ENCODE measurements at regions of chr3 and their contacts with region 1.

Region 1: GRCh38 chr3:10322352-10322710 is 1.4 kb upstream of the SEC13 start:
- DNase-seq: peak in 3 of 9 donors; percentile 12 to 32 (median 17)
- ATAC-seq: no peak
- H3K4me3 ChIP-seq: no peak overlapping the region
- H3K4me3 Mint-ChIP-seq: peak overlapping the region in 5 of 10 donors; percentile 5 to 85 (median 32)
- H3K27ac ChIP-seq: no peak overlapping the region
- H3K27ac Mint-ChIP-seq: peak overlapping the region in 8 of 9 donors; percentile 0 to 97 (median 86)
- H3K4me1 ChIP-seq: peaks cover 12 to 22% of the 10 kb centered on the region in 2 donors
- H3K4me1 Mint-ChIP-seq: peaks cover 5 to 40% (median 30%) of the 10 kb centered on the region in 7 donors
- H3K27me3 ChIP-seq: no peaks in the 10 kb centered on the region
- H3K27me3 Mint-ChIP-seq: peaks cover 0 to 27% (median 9%) of the 10 kb centered on the region in 5 donors

Region 2: GRCh38 chr3:8963137-8963869 is 1359.0 kb before region 1 on chr3 and contains the start of gene RAD18:
- CTCF ChIA-PET with region 1: no interaction called
- POLR2A ChIA-PET with region 1: no interaction called
- intact Hi-C with region 1: loop called in 1 of 2 experiments (anchors 1 kb)
- DNase-seq: peak; percentile 87 to 95 (median 92)
- ATAC-seq: peak; percentile 97
- H3K4me3 ChIP-seq: peak within 1 kb of the TSS; percentile 80
- H3K4me3 Mint-ChIP-seq: peak within 1 kb of the TSS; percentile 85 to 99 (median 96)
- H3K27ac ChIP-seq: peak within 1 kb of the TSS; percentile 94
- H3K27ac Mint-ChIP-seq: peak within 1 kb of the TSS; percentile 94 to 99 (median 97)
- H3K4me1 ChIP-seq: peaks cover 6 to 10% of the 10 kb centered on the region in 2 donors
- H3K4me1 Mint-ChIP-seq: peaks cover 7 to 45% (median 38%) of the 10 kb centered on the region in 7 donors
- H3K27me3 ChIP-seq: no peaks in the 10 kb centered on the region
- H3K27me3 Mint-ChIP-seq: peaks cover 0 to 8% (median 4%) of the 10 kb centered on the region in 5 donors
- total RNA-seq, gene RAD18: 9.3 to 36.4 (median 18.2) TPM

Region 3: GRCh38 chr3:9649791-9650521 is 672.4 kb before region 1 on chr3:
- CTCF ChIA-PET with region 1: no interaction called
- POLR2A ChIA-PET with region 1: no interaction called
- intact Hi-C with region 1: loop called (anchors 1 kb)
- DNase-seq: peak in 2 of 9 donors; percentile 4 to 5
- ATAC-seq: peak; percentile 15
- H3K4me3 ChIP-seq: peak overlapping the region; percentile 97
- H3K4me3 Mint-ChIP-seq: peak overlapping the region; percentile 86 to 98 (median 95)
- H3K27ac ChIP-seq: peak overlapping the region; percentile 85
- H3K27ac Mint-ChIP-seq: peak overlapping the region; percentile 91 to 98 (median 97)
- H3K4me1 ChIP-seq: peaks cover 15 to 19% of the 10 kb centered on the region in 2 donors
- H3K4me1 Mint-ChIP-seq: peaks cover 19 to 51% (median 37%) of the 10 kb centered on the region in 7 donors
- H3K27me3 ChIP-seq: no peaks in the 10 kb centered on the region
- H3K27me3 Mint-ChIP-seq: peaks cover 0 to 3% (median 0%) of the 10 kb centered on the region in 5 donors

Region 4: GRCh38 chr3:9843715-9844438 is 478.5 kb before region 1 on chr3 and contains the start of gene RPUSD3:
- CTCF ChIA-PET with region 1: no interaction called
- POLR2A ChIA-PET with region 1: no interaction called
- intact Hi-C with region 1: loop called (anchors 1 to 2 kb)
- DNase-seq: peak; percentile 90 to 99 (median 94)
- ATAC-seq: peak; percentile 100
- H3K4me3 ChIP-seq: peak within 1 kb of the TSS; percentile 83
- H3K4me3 Mint-ChIP-seq: peak within 1 kb of the TSS; percentile 93 to 100 (median 97)
- H3K27ac ChIP-seq: peak within 1 kb of the TSS; percentile 82
- H3K27ac Mint-ChIP-seq: peak within 1 kb of the TSS; percentile 68 to 94 (median 91)
- H3K4me1 ChIP-seq: peaks cover 4 to 5% of the 10 kb centered on the region in 2 donors
- H3K4me1 Mint-ChIP-seq: peaks cover 12 to 40% (median 23%) of the 10 kb centered on the region in 7 donors
- H3K27me3 ChIP-seq: no peaks in the 10 kb centered on the region
- H3K27me3 Mint-ChIP-seq: no peaks in the 10 kb centered on the region
- total RNA-seq, gene RPUSD3: 17.7 to 61.2 (median 58.0) TPM

Region 5: GRCh38 chr3:10026084-10026890 is 296.0 kb before region 1 on chr3 and contains the start of gene FANCD2:
- CTCF ChIA-PET with region 1: no interaction called
- POLR2A ChIA-PET with region 1: no interaction called
- intact Hi-C with region 1: loop called (anchors 1 kb)
- DNase-seq: peak; percentile 88 to 99 (median 94)
- ATAC-seq: peak; percentile 95
- H3K4me3 ChIP-seq: peak within 1 kb of the TSS; percentile 96
- H3K4me3 Mint-ChIP-seq: peak within 1 kb of the TSS; percentile 93 to 99 (median 96)
- H3K27ac ChIP-seq: peak within 1 kb of the TSS; percentile 89
- H3K27ac Mint-ChIP-seq: peak within 1 kb of the TSS; percentile 86 to 98 (median 97)
- H3K4me1 ChIP-seq: peaks cover 11 to 13% of the 10 kb centered on the region in 2 donors
- H3K4me1 Mint-ChIP-seq: peaks cover 0 to 45% (median 29%) of the 10 kb centered on the region in 7 donors
- H3K27me3 ChIP-seq: no peaks in the 10 kb centered on the region
- H3K27me3 Mint-ChIP-seq: no peaks in the 10 kb centered on the region
- total RNA-seq, gene FANCD2: 18.3 to 41.5 (median 34.1) TPM

Region 6: GRCh38 chr3:10248184-10249080 is 73.9 kb before region 1 on chr3 and contains the start of gene TATDN2:
- CTCF ChIA-PET with region 1: no interaction called
- POLR2A ChIA-PET with region 1: interaction called, 6 read pairs
- intact Hi-C with region 1: loop called (anchors 1 to 2 kb)
- DNase-seq: peak; percentile 80 to 91 (median 88)
- ATAC-seq: peak; percentile 98
- H3K4me3 ChIP-seq: peak within 1 kb of the TSS; percentile 99
- H3K4me3 Mint-ChIP-seq: peak within 1 kb of the TSS; percentile 96 to 100 (median 99)
- H3K27ac ChIP-seq: peak within 1 kb of the TSS; percentile 80
- H3K27ac Mint-ChIP-seq: peak within 1 kb of the TSS; percentile 91 to 97 (median 95)
- H3K4me1 ChIP-seq: peaks cover 28 to 30% of the 10 kb centered on the region in 2 donors
- H3K4me1 Mint-ChIP-seq: peaks cover 44 to 63% (median 52%) of the 10 kb centered on the region in 7 donors
- H3K27me3 ChIP-seq: no peaks in the 10 kb centered on the region
- H3K27me3 Mint-ChIP-seq: no peaks in the 10 kb centered on the region
- total RNA-seq, gene TATDN2: 52.9 to 88.8 (median 71.6) TPM

Region 7: DNA sequence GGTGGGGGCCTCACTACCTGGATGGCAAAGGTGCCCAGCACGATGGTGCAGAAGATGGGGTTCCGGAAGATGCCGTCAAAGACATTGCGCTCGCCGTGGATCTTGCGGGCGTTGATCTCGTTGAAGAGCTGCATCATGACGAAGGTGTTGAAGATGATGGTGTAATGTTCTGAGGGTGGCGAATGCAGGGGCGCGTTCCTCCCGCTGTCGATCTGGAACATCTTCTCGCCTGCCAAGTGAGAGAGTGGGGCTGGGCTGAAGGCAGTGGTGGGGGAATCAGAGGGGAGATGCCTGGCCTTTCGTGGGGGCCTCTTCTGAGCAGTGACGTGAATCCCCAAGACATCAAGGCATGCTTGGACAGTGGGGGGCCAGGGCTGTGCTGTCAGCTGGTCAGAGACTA is 18.1 kb after region 1 on chr3:
- CTCF ChIA-PET with region 1: no interaction called
- POLR2A ChIA-PET with region 1: no interaction called
- intact Hi-C with region 1: no loop called
- DNase-seq: no peak
- ATAC-seq: no peak
- H3K4me3 ChIP-seq: no peak overlapping the region
- H3K4me3 Mint-ChIP-seq: no peak overlapping the region
- H3K27ac ChIP-seq: no peak overlapping the region
- H3K27ac Mint-ChIP-seq: no peak overlapping the region
- H3K4me1 ChIP-seq: no peaks in the 10 kb centered on the region
- H3K4me1 Mint-ChIP-seq: peaks cover 0 to 6% (median 0%) of the 10 kb centered on the region in 7 donors
- H3K27me3 ChIP-seq: no peaks in the 10 kb centered on the region
- H3K27me3 Mint-ChIP-seq: peaks cover 0 to 6% (median 0%) of the 10 kb centered on the region in 5 donors

Measured in naive thymus-derived CD4-positive, alpha-beta T cell (primary cell).